ENCODE measurements at regions of chr7 and their contacts with region 1.

Region 1: GRCh38 chr7:155205368-155206317 is 92.0 kb upstream of the INSIG1 start:
- DNase-seq: peak; percentile 68 to 90 (median 79)
- ATAC-seq: peak; percentile 90
- H3K4me3 ChIP-seq: peak overlapping the region; percentile 52
- H3K4me3 Mint-ChIP-seq: peak overlapping the region; percentile 70 to 94 (median 86)
- H3K27ac ChIP-seq: peak overlapping the region; percentile 8
- H3K27ac Mint-ChIP-seq: peak overlapping the region; percentile 56 to 99 (median 86)
- H3K4me1 ChIP-seq: peaks cover 8 to 11% of the 10 kb centered on the region in 2 donors
- H3K4me1 Mint-ChIP-seq: peaks cover 19 to 30% (median 21%) of the 10 kb centered on the region in 7 donors
- H3K27me3 ChIP-seq: no peaks in the 10 kb centered on the region
- H3K27me3 Mint-ChIP-seq: no peaks in the 10 kb centered on the region

Region 2: DNA sequence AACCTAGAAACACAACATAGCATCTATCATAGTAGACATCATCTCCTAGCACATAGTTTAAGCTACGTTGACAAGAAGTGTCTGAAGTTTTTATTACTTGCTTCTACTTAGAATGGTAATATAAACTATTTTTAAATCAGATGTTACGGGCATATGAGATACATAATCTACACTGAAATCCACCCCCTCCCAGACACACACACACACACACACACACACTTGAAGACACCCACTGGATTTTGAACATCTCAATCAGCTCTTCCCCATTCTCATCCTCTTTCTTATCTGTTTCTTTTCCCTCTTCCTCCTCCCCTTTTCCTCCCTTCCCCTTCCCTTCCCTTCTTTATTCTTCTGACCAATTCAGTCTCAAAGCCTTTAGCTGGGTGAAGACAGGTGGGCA is 378.6 kb before region 1 on chr7:
- CTCF ChIA-PET with region 1: no interaction called
- POLR2A ChIA-PET with region 1: no interaction called
- intact Hi-C with region 1: no loop called
- DNase-seq: no peak
- ATAC-seq: no peak
- H3K4me3 ChIP-seq: no peak overlapping the region
- H3K4me3 Mint-ChIP-seq: no peak overlapping the region
- H3K27ac ChIP-seq: no peak overlapping the region
- H3K27ac Mint-ChIP-seq: no peak overlapping the region
- H3K4me1 ChIP-seq: no peaks in the 10 kb centered on the region
- H3K4me1 Mint-ChIP-seq: no peaks in the 10 kb centered on the region
- H3K27me3 ChIP-seq: no peaks in the 10 kb centered on the region
- H3K27me3 Mint-ChIP-seq: peaks cover 0 to 27% (median 16%) of the 10 kb centered on the region in 5 donors

Region 3: DNA sequence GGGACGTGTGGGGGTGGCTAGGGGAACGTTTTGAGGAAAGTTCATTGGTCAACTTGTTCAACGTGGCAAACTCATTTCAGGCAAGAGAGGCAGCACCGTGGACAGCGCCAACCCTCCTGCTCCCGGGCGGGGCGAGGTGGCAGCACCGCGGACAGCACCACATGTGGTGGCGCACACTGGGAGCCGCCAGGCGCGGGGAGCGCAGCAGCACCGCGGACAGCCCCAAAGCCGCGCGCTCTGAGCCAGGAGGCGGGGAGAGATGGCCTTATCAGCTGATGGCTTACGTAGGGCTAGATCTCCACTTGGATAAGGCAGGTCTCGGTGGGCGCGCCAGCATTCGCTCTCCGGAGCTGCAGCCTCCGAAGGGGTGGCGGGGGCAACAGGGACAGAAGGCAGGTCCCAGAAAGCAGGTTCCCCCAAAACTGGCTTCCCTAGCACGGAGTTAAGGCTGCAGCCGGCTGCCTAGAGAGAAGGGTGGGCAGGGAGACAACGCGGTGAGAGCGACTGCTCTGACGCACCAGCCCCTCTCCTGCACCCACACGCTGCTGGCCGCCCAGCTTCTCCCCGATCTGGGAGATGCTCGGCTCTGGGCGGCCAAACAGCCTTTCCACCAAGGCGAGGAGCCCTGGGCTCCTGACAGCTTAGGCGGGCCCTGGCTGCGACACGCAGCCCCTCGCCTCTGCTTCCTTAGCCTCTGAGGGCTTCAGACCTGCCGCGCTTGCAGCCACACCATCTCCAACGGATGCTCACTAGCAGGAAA is 135.5 kb before region 1 on chr7 and contains the start of gene HTR5A:
- CTCF ChIA-PET with region 1: no interaction called
- POLR2A ChIA-PET with region 1: no interaction called
- intact Hi-C with region 1: loop called in 1 of 2 experiments (anchors 1 kb)
- DNase-seq: peak; percentile 58 to 87 (median 78)
- ATAC-seq: peak; percentile 99
- H3K4me3 ChIP-seq: no peak within 1 kb of the TSS
- H3K4me3 Mint-ChIP-seq: no peak within 1 kb of the TSS
- H3K27ac ChIP-seq: no peak within 1 kb of the TSS
- H3K27ac Mint-ChIP-seq: peak within 1 kb of the TSS in 1 of 9 donors; percentile 19
- H3K4me1 ChIP-seq: no peaks in the 10 kb centered on the region
- H3K4me1 Mint-ChIP-seq: peaks cover 0 to 5% (median 0%) of the 10 kb centered on the region in 7 donors
- H3K27me3 ChIP-seq: peaks cover 0 to 15% of the 10 kb centered on the region in 2 donors
- H3K27me3 Mint-ChIP-seq: peaks cover 28 to 67% (median 52%) of the 10 kb centered on the region in 5 donors
- total RNA-seq, gene HTR5A: not detected

Region 4: GRCh38 chr7:155190688-155191087 is 15.0 kb before region 1 on chr7:
- CTCF ChIA-PET with region 1: interaction called, 3 read pairs
- POLR2A ChIA-PET with region 1: no interaction called
- intact Hi-C with region 1: loop called (anchors 1 to 2 kb)
- DNase-seq: peak in 7 of 9 donors; percentile 28 to 76 (median 48)
- ATAC-seq: peak; percentile 83
- H3K4me3 ChIP-seq: no peak overlapping the region
- H3K4me3 Mint-ChIP-seq: peak overlapping the region in 4 of 10 donors; percentile 32 to 59 (median 48)
- H3K27ac ChIP-seq: no peak overlapping the region
- H3K27ac Mint-ChIP-seq: no peak overlapping the region
- H3K4me1 ChIP-seq: no peaks in the 10 kb centered on the region
- H3K4me1 Mint-ChIP-seq: peaks cover 0 to 17% (median 3%) of the 10 kb centered on the region in 7 donors
- H3K27me3 ChIP-seq: no peaks in the 10 kb centered on the region
- H3K27me3 Mint-ChIP-seq: peaks cover 2 to 17% (median 8%) of the 10 kb centered on the region in 5 donors

Region 5: DNA sequence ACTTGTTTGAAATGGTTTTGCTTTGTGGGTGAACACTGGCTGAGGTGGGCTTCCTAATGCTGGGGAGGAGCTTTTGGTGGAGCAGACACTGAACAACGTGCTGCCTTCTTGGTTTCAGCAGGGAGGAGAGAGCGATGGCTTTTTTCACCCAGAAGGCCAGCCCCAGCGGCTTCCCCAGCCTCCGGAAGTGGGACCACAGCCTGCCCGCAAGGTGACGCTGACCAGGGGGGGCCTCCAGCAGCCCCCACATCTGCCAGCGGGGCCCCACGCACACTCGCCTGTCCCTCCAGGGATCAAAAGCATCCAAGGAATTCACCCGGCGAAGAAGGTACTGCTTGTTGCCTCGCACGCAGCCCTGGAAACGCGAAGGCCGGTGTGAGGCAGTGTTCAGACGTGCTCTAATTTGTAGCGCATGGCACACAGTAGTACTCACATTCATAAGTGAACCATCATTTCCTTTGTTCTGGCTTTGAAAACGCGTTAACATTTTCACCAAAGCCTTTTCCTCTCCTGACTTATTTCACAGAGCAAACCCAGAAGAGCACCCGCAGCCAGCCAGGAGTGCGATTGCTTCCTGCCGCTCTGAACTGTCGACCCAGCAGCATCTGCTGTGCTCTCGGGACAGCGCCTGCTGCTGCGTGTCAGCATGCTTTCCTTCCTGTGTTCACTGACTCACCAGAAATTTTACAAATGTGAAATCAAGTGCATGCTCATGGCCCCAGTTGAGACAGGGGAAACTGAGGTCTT is 558.2 kb after region 1 on chr7:
- CTCF ChIA-PET with region 1: no interaction called
- POLR2A ChIA-PET with region 1: no interaction called
- intact Hi-C with region 1: loop called in 1 of 2 experiments (anchors 1 kb)
- DNase-seq: peak in 8 of 9 donors; percentile 48 to 73 (median 60)
- ATAC-seq: peak; percentile 80
- H3K4me3 ChIP-seq: peak overlapping the region; percentile 12
- H3K4me3 Mint-ChIP-seq: peak overlapping the region; percentile 64 to 91 (median 80)
- H3K27ac ChIP-seq: peak overlapping the region; percentile 67
- H3K27ac Mint-ChIP-seq: peak overlapping the region; percentile 73 to 98 (median 91)
- H3K4me1 ChIP-seq: peaks cover 24 to 31% of the 10 kb centered on the region in 2 donors
- H3K4me1 Mint-ChIP-seq: peaks cover 39 to 67% (median 61%) of the 10 kb centered on the region in 7 donors
- H3K27me3 ChIP-seq: no peaks in the 10 kb centered on the region
- H3K27me3 Mint-ChIP-seq: no peaks in the 10 kb centered on the region

Measured in naive thymus-derived CD4-positive, alpha-beta T cell (primary cell).